Heart right ventricle (tissue), 16 donors: ENCODE measurements at regions of chr3 and their contacts with region 1.

Region 1: GRCh38 chr3:143847787-143848631 is at the start of gene SLC9A9:
- DNase-seq: peak; percentile 10 to 15
- ATAC-seq: peak; percentile 69 to 88 (median 80)
- H3K4me3 ChIP-seq: peak within 1 kb of the TSS; percentile 33 to 68 (median 60)
- H3K27ac ChIP-seq: peak within 1 kb of the TSS in 6 of 10 donors; percentile 39 to 83 (median 54)
- H3K4me1 ChIP-seq: peaks cover 0 to 48% (median 4%) of the 10 kb centered on the region in 9 donors
- H3K27me3 ChIP-seq: no peaks in the 10 kb centered on the region
- CTCF ChIP-seq: no peak
- total RNA-seq, gene SLC9A9: 2.1 to 8.4 (median 3.6) TPM

Region 2: GRCh38 chr3:142850386-142851023 is 997.5 kb before region 1 on chr3:
- intact Hi-C with region 1: no loop called
- DNase-seq: no peak
- ATAC-seq: peak in 6 of 8 donors; percentile 51 to 87 (median 62)
- H3K4me3 ChIP-seq: no peak overlapping the region
- H3K27ac ChIP-seq: peak overlapping the region in 5 of 10 donors; percentile 1 to 53 (median 35)
- H3K4me1 ChIP-seq: peaks cover 0 to 48% (median 20%) of the 10 kb centered on the region in 9 donors
- H3K27me3 ChIP-seq: no peaks in the 10 kb centered on the region
- CTCF ChIP-seq: no peak

Region 3: DNA sequence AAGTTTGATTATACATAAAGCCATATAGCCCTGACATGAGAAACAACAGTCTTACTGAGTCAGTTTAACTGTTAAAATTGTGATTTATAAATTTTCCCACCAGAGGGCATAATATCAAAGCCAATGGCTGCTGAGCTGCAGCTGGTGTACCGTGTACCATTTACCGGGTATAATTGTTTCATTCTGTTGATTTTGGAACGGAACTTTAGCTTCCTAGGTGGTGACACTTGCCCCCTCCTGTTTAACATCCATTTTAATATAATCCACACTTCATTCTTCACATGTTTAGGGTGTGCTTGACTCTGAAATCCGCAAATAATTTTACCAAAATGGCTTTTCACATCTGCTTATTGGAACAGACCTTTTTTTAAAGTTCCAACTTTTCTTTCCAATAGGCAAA is 72.5 kb before region 1 on chr3:
- intact Hi-C with region 1: loop called in 1 of 10 experiments (anchors 10 kb)
- DNase-seq: no peak
- ATAC-seq: peak in 7 of 8 donors; percentile 51 to 79 (median 71)
- H3K4me3 ChIP-seq: peak overlapping the region in 6 of 10 donors; percentile 6 to 28 (median 21)
- H3K27ac ChIP-seq: no peak overlapping the region
- H3K4me1 ChIP-seq: peaks cover 0 to 7% (median 2%) of the 10 kb centered on the region in 9 donors
- H3K27me3 ChIP-seq: no peaks in the 10 kb centered on the region
- CTCF ChIP-seq: peak; percentile 11 to 71 (median 61)